ENCODE measurements at regions of chr3 and their contacts with region 1.

Region 1: DNA sequence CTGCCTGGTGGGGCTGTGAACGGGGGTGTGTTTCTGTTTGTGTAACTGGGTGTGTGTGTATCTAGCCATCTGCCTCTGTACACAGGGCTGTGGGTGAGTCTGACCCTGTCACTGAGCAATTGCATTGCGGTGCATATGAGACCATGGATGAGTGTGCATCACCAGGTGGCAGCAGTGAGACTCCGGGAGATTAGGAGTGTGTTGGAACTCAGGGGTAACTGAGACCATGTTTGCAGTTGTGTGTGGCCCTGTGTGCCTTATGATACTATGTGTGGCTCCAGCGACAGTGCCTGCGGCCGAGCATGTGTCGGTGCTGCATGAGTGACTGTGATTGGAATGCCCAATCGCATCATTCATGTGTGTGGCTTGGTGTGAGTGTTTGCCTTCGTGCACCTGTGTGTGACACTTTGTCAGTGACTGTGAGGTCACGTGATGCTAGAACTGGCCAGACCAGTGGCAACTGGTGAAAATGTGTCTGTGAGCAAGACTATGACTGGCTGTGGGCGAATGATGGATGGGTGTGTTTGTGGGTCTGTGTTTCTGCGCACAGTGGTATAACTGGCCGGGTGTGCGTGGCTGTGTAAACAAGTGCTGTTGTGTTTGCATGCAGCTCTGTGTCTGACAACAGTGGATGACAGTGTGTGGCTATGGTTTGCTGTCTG is 14.0 kb downstream of the VILL start:
- DNase-seq: peak; percentile 33 to 77 (median 56)
- ATAC-seq: peak; percentile 72
- H3K4me3 ChIP-seq: no peak overlapping the region
- H3K4me3 Mint-ChIP-seq: no peak overlapping the region
- H3K27ac ChIP-seq: no peak overlapping the region
- H3K27ac Mint-ChIP-seq: peak overlapping the region; percentile 82
- H3K4me1 ChIP-seq: peaks cover 28% of the 10 kb centered on the region
- H3K4me1 Mint-ChIP-seq: peaks cover 22% of the 10 kb centered on the region
- H3K27me3 ChIP-seq: no peaks in the 10 kb centered on the region
- H3K27me3 Mint-ChIP-seq: no peaks in the 10 kb centered on the region
- CTCF ChIP-seq: peak; percentile 66

Region 2: DNA sequence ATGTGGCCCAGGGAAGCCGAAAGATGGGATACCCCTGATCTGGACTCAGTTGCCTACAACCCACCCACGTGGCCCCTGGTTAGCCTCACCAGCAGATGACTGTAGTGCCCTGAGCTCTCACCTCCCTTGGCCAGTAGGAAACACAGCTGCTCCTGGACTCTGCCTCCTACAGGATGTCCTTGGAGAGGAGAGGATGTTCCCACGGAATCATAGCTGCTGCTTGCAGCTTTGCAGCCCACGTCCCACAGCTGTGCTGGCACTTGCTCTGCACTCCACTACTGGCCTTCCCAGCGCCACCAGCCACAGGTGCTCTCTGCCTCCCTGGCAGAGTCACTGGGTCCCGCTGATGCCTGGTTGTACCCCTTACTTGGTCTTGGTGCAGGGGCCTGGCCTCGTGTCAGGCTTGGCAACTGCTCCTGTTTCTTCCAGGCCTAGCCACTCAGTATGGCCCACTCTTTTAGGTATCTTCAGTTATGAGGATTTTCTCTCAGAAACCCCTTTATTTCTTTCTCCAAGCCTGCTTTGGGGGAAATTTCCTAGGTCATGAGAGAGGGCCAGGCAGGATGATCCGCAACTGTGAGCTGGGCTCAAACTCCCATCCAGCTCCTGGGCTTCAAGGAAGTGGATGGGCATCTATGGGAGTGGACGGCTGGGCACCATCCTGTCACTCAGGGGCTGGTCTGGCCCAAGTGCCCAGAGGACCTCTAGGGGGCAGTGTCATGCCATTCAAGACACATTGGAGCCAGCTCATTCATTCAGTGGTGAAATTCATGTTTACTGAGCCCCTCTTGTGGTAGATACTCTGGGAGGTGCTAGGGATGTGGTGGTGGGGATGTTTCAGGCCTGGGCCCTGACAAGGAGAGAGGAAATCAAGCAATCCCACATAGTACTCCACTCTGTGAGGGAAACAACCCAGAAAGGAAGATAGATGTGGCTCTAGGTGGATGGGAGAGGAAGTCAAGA is 30.1 kb before region 1 on chr3:
- CTCF ChIA-PET with region 1: interaction called, 11 read pairs
- POLR2A ChIA-PET with region 1: no interaction called
- intact Hi-C with region 1: loop called (anchors 1 to 2 kb)
- DNase-seq: peak; percentile 49 to 85 (median 62)
- ATAC-seq: peak; percentile 97
- H3K4me3 ChIP-seq: no peak overlapping the region
- H3K4me3 Mint-ChIP-seq: no peak overlapping the region
- H3K27ac ChIP-seq: no peak overlapping the region
- H3K27ac Mint-ChIP-seq: no peak overlapping the region
- H3K4me1 ChIP-seq: peaks cover 5% of the 10 kb centered on the region
- H3K4me1 Mint-ChIP-seq: peaks cover 4% of the 10 kb centered on the region
- H3K27me3 ChIP-seq: no peaks in the 10 kb centered on the region
- H3K27me3 Mint-ChIP-seq: no peaks in the 10 kb centered on the region
- CTCF ChIP-seq: peak; percentile 85

Region 3: DNA sequence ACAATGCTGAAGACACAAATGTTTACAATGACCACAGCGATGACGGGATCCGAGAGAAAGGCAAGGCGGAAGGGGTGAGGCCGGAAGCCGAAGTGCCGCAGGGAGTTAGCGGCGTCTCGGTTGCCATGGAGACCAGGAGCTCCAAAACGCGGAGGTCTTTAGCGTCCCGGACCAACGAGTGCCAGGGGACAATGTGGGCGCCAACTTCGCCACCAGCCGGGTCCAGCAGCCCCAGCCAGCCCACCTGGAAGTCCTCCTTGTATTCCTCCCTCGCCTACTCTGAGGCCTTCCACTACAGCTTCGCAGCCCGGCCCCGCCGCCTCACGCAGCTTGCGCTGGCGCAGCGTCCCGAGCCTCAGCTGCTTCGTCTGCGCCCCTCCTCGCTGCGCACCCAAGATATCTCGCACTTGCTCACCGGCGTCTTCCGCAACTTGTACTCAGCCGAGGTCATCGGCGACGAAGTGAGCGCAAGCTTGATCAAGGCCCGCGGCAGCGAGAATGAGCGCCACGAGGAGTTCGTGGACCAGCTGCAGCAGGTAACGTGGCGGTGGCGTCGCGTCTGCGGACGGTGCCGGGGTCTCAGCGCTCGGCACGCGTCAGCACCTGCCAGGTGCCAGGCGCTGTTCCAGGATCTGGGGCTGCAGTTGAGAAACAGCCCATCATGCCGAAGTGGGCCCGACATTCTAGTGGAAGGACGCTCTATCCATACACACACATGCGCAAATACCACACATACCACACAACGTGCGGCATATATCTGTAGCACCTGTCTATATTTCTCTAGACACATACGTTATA is 34.8 kb after region 1 on chr3 and contains the start of gene DLEC1:
- CTCF ChIA-PET with region 1: interaction called, 6 read pairs
- POLR2A ChIA-PET with region 1: no interaction called
- intact Hi-C with region 1: loop called (anchors 1 to 2 kb)
- DNase-seq: peak; percentile 70 to 95 (median 80)
- ATAC-seq: peak; percentile 59
- H3K4me3 ChIP-seq: peak within 1 kb of the TSS; percentile 76
- H3K4me3 Mint-ChIP-seq: peak within 1 kb of the TSS; percentile 65
- H3K27ac ChIP-seq: peak within 1 kb of the TSS; percentile 76 to 96
- H3K27ac Mint-ChIP-seq: peak within 1 kb of the TSS; percentile 91
- H3K4me1 ChIP-seq: peaks cover 46% of the 10 kb centered on the region
- H3K4me1 Mint-ChIP-seq: peaks cover 28% of the 10 kb centered on the region
- H3K27me3 ChIP-seq: no peaks in the 10 kb centered on the region
- H3K27me3 Mint-ChIP-seq: no peaks in the 10 kb centered on the region
- CTCF ChIP-seq: no peak
- total RNA-seq, gene DLEC1: 4.4 to 5.1 TPM

Region 4: GRCh38 chr3:38054291-38055001 is 49.9 kb after region 1 on chr3:
- CTCF ChIA-PET with region 1: no interaction called
- POLR2A ChIA-PET with region 1: no interaction called
- intact Hi-C with region 1: no loop called
- DNase-seq: no peak
- ATAC-seq: no peak
- H3K4me3 ChIP-seq: no peak overlapping the region
- H3K4me3 Mint-ChIP-seq: no peak overlapping the region
- H3K27ac ChIP-seq: no peak overlapping the region
- H3K27ac Mint-ChIP-seq: no peak overlapping the region
- H3K4me1 ChIP-seq: no peaks in the 10 kb centered on the region
- H3K4me1 Mint-ChIP-seq: no peaks in the 10 kb centered on the region
- H3K27me3 ChIP-seq: no peaks in the 10 kb centered on the region
- H3K27me3 Mint-ChIP-seq: no peaks in the 10 kb centered on the region
- CTCF ChIP-seq: no peak

Region 5: DNA sequence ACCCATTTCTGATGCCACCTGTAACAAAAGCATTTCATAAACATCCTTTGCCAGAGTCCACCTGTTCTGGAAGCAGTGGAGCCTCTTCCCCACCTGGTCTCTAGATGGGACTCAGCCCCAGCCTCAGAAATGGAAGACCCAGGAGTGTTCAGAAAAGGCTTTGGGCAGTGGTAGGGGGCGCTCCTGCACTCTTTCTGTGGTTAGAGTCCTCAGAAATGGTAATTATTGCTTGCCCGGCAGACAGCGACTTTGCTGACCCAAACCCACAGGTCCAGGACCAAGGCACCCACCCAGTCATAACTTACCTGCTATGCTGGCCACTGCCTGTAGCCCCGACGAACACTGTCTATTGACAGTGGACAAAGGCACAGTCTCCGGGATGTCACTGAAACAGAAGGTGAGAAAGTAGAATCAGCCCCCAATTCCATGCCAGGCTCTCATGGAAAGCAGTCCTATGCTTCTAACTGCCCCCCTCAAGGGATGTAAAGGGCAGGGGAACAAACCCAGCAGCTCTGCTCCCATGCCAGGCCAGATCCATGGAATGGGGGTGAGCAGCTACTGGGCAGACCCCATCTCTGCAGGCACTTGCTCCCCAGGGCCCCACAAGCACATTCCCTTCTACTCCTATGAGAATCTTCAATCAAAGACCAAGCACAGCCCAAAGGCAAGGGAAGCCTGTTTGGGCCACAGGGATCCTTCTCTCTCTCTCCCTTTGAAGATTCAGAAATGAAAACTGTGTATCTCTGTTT is 127.2 kb after region 1 on chr3:
- CTCF ChIA-PET with region 1: no interaction called
- POLR2A ChIA-PET with region 1: no interaction called
- intact Hi-C with region 1: loop called in 1 of 2 experiments (anchors 5 kb)
- DNase-seq: peak in 6 of 14 experiments; percentile 23 to 60 (median 43)
- ATAC-seq: no peak
- H3K4me3 ChIP-seq: no peak overlapping the region
- H3K4me3 Mint-ChIP-seq: no peak overlapping the region
- H3K27ac ChIP-seq: no peak overlapping the region
- H3K27ac Mint-ChIP-seq: peak overlapping the region; percentile 63
- H3K4me1 ChIP-seq: peaks cover 46% of the 10 kb centered on the region
- H3K4me1 Mint-ChIP-seq: peaks cover 51% of the 10 kb centered on the region
- H3K27me3 ChIP-seq: no peaks in the 10 kb centered on the region
- H3K27me3 Mint-ChIP-seq: no peaks in the 10 kb centered on the region
- CTCF ChIP-seq: peak; percentile 28

Region 6: DNA sequence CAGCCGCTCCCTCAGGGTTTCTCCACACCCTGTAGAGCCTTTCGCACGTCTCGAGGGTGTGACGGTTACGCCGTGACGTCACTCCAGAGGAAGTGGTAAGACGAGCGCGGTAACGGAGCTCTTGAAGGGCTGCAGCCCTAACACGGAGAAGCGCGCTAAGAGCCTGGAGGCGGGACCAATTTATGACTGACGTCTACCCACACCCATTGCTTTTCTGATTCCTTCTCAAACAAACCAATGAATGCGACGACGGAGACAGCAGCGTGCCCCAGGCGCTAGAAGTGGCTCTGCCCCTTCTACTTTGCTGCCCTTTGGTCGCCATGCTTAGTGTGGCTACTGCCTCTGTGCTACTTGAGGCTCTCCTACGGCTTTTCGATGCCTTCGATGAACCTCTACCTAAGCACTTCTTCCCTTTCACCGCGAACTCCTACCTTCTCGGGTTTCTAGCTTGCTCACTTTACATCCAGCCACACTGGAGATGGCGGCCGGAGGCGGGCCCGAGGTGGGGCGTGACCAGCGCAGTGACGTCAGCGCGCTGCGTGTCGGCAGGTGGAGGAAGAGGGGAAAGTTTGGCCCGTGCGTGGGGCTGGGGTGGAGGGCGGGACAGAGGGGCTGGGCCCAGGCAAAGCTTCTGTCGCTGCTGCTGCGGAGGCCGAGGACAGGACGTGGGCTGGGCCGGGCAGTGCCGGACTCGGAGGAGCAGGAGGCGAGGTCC is 160.6 kb after region 1 on chr3 and contains the start of gene OXSR1:
- CTCF ChIA-PET with region 1: no interaction called
- POLR2A ChIA-PET with region 1: interaction called, 3 read pairs
- intact Hi-C with region 1: loop called in 1 of 2 experiments (anchors 5 kb)
- DNase-seq: peak; percentile 91 to 100 (median 95)
- ATAC-seq: peak; percentile 89
- H3K4me3 ChIP-seq: peak within 1 kb of the TSS; percentile 80
- H3K4me3 Mint-ChIP-seq: peak within 1 kb of the TSS; percentile 91
- H3K27ac ChIP-seq: peak within 1 kb of the TSS; percentile 98 to 100
- H3K27ac Mint-ChIP-seq: peak within 1 kb of the TSS; percentile 99
- H3K4me1 ChIP-seq: peaks cover 37% of the 10 kb centered on the region
- H3K4me1 Mint-ChIP-seq: peaks cover 52% of the 10 kb centered on the region
- H3K27me3 ChIP-seq: no peaks in the 10 kb centered on the region
- H3K27me3 Mint-ChIP-seq: no peaks in the 10 kb centered on the region
- CTCF ChIP-seq: no peak
- total RNA-seq, gene OXSR1: 28.3 to 30.3 TPM

Region 7: DNA sequence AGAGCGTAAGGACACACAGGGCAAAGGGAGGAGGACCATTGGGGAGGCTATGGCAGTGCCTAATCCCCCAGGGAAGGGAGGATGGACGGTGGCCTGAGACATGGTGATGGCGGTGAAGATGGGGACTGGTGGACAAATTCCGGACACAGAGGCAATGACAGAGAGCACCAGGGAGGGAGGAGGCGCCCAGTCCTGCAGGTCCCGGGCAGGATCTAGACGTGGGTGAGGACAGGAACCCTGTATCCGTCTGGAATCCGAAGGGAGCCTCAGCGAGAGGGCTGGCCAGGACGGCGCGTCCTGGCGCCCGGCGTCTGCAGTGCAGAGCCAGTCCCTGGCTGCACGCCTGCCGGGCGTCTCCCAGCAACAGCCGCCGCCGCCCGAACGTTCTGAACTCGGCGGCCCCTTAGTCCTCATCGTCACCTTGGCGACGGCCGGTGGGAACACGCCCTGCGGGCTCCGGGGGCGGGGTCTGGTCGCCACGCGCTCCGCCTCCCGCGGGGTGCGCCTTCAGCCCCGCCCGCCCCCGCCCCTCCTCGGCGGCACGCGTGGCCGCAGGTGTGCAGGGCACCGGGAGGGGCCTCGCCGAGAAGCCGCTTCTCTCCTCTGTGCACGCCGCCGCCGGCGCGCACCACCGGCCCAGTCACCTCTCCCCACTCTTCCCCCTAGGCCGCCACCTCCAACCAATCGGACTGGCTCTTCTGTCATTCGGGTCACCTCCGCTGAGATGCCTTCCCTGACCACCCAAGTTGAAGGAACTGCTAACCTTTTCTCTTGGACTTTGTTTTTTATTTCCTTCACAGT is 1176.2 kb after region 1 on chr3:
- CTCF ChIA-PET with region 1: no interaction called
- POLR2A ChIA-PET with region 1: no interaction called
- intact Hi-C with region 1: loop called in 1 of 2 experiments (anchors 10 kb)
- DNase-seq: peak; percentile 82 to 96 (median 88)
- ATAC-seq: peak; percentile 88
- H3K4me3 ChIP-seq: peak overlapping the region; percentile 53
- H3K4me3 Mint-ChIP-seq: peak overlapping the region; percentile 82
- H3K27ac ChIP-seq: peak overlapping the region; percentile 47 to 48
- H3K27ac Mint-ChIP-seq: peak overlapping the region; percentile 71
- H3K4me1 ChIP-seq: peaks cover 40% of the 10 kb centered on the region
- H3K4me1 Mint-ChIP-seq: peaks cover 28% of the 10 kb centered on the region
- H3K27me3 ChIP-seq: no peaks in the 10 kb centered on the region
- H3K27me3 Mint-ChIP-seq: no peaks in the 10 kb centered on the region
- CTCF ChIP-seq: no peak

Region 8: DNA sequence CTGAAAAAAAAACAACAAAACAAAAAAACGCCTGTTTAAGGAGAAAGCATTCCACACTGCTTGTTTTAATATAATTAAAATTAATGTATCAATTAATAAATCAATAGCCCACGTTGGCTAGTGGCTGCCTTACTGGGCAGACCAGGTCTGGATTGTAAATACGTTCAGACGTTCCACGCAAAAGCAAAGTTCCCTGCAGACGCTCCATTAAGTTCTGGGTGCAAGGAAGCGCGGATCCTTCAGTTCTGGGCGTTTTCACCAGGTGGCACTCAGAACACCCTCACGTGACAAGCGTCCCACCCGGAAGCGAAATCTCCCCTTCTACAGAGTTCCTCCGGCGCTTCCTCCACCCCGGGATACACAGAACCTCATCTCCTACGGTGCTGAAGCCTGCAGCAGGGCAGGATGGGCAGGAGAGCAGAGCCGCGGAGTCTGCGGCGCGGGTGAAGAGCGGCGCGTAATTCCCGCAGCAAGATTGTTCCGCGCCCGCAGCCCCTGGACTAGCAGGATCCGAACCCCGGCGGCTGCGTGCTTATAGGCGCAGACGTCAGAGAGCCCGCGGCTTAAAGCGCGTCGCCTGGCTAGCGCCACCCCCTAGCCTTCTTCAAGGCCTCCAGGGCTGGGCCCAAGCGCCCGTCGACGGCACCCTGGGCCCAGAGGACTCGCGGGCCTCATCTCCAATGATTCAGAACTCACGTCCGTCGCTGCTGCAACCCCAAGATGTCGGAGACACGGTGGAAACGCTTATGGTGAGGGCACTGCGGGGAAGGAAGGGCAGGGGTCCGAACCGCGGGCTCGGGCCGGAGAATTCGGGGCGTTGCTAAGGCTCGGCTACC is 1378.7 kb after region 1 on chr3 and contains the start of gene SLC25A38:
- CTCF ChIA-PET with region 1: no interaction called
- POLR2A ChIA-PET with region 1: no interaction called
- intact Hi-C with region 1: loop called in 1 of 2 experiments (anchors 10 kb)
- DNase-seq: peak; percentile 58 to 94 (median 75)
- ATAC-seq: peak; percentile 82
- H3K4me3 ChIP-seq: peak within 1 kb of the TSS; percentile 95
- H3K4me3 Mint-ChIP-seq: peak within 1 kb of the TSS; percentile 94
- H3K27ac ChIP-seq: peak within 1 kb of the TSS; percentile 93 to 97
- H3K27ac Mint-ChIP-seq: peak within 1 kb of the TSS; percentile 97
- H3K4me1 ChIP-seq: peaks cover 53% of the 10 kb centered on the region
- H3K4me1 Mint-ChIP-seq: peaks cover 55% of the 10 kb centered on the region
- H3K27me3 ChIP-seq: no peaks in the 10 kb centered on the region
- H3K27me3 Mint-ChIP-seq: no peaks in the 10 kb centered on the region
- CTCF ChIP-seq: peak; percentile 59
- total RNA-seq, gene SLC25A38: 43.2 to 44.7 TPM